GM12878 (cell line): ENCODE measurements at regions of chr11 and their contacts with region 1.

Region 1: DNA sequence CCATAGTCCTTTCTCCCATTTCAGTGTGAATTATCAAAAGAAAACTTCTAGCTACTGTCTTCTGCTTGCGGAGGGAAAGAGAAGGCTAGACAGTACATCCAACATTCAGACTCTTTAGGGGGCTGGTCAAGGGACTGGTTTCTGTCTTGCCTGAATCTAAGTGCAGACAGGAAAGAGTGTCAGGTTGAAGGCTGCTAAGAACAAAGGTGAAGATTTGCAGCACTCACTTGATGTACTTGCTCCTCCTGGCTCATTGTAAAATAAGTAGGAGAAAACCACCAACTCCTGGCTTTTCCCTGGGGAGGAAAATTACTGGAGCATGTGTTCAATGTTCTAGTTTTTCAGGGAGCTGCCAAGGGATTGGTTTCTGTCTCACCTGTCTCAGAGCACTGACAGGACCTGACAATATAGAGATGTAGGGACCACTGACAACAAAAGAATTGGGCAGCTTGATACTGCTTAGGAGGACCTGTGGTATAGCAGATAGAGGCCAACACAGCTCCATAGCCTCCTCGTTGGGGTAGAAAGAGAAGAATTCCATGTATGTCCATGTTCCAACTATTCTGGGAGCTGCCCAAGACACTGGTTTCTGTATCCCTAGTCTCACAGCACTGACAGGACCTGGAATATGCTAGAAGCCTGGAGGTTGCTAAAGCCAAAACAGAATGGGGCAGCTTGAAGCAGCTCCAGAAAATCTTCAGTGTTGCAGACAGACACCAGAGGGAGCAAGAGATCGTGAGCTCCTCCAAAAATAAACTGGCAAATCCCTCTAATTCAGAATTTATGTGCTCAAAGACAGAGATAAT is 39.7 kb upstream of the MMP12 start:
- DNase-seq: no peak
- ATAC-seq: peak; percentile 85
- H3K4me3 ChIP-seq: no peak overlapping the region
- H3K27ac ChIP-seq: no peak overlapping the region
- H3K4me1 ChIP-seq: no peaks in the 10 kb centered on the region
- H3K27me3 ChIP-seq: peaks cover 0 to 2% of the 10 kb centered on the region in 2 experiments; a peak in 1 of 4 replicates
- CTCF ChIP-seq: peak; percentile 50 to 74 (median 64); a peak in 5 of 6 replicates
- EP300 ChIP-seq: no peak
- POLR2A ChIP-seq: no peak
- RAD21 ChIP-seq: peak; percentile 51

Region 2: DNA sequence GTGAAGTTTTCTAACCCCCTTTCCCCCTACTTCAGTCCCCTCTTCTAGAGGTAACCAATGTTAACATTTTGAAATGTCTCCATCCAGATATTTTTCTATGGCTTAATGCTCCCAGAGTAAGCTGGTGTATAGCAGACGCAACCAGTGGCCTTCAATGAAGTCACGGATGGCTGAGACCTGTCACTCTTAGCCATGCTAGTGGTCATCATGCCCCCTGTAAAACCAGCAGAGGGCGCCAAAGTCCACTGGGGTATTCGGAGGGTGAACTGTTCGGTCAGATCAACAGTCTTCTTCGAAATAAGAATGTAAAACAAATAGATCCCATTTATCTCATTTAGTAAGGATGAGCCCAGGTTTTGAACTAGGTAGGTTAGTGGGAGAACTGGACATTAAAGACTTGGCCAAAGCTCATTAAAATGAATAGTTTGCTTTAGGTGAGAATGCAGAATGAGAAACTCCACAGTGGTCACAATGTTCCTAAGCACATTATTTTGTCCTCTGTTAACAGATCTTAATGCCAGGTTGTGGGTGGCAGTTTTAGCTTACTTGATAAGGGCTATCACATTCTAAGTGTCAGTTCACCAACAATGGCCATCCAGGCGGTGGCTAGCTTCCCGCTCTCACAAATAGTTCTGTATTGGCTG is 181.1 kb before region 1 on chr11:
- CTCF ChIA-PET with region 1: interaction called, 11 read pairs
- POLR2A ChIA-PET with region 1: no interaction called
- RAD21 ChIA-PET with region 1: interaction called, 3 read pairs
- SMC1A ChIA-PET with region 1: interaction called, 6 read pairs
- in situ Hi-C with region 1: no loop called
- intact Hi-C with region 1: no loop called
- DNase-seq: no peak
- ATAC-seq: peak; percentile 100
- H3K4me3 ChIP-seq: no peak overlapping the region
- H3K27ac ChIP-seq: no peak overlapping the region
- H3K4me1 ChIP-seq: no peaks in the 10 kb centered on the region
- H3K27me3 ChIP-seq: no peaks in the 10 kb centered on the region
- CTCF ChIP-seq: peak; percentile 77 to 88 (median 83)
- EP300 ChIP-seq: no peak
- POLR2A ChIP-seq: no peak
- RAD21 ChIP-seq: peak; percentile 68

Region 3: GRCh38 chr11:102831489-102832440 is 82.7 kb before region 1 on chr11:
- CTCF ChIA-PET with region 1: interaction called, 23 read pairs
- POLR2A ChIA-PET with region 1: no interaction called
- RAD21 ChIA-PET with region 1: interaction called, 18 read pairs
- SMC1A ChIA-PET with region 1: interaction called, 19 read pairs
- in situ Hi-C with region 1: no loop called
- intact Hi-C with region 1: no loop called
- DNase-seq: no peak
- ATAC-seq: peak; percentile 80
- H3K4me3 ChIP-seq: no peak overlapping the region
- H3K27ac ChIP-seq: no peak overlapping the region
- H3K4me1 ChIP-seq: no peaks in the 10 kb centered on the region
- H3K27me3 ChIP-seq: peaks cover 0 to 9% of the 10 kb centered on the region in 2 experiments; a peak in 2 of 4 replicates
- CTCF ChIP-seq: peak; percentile 31 to 60 (median 53); a peak in 5 of 6 replicates
- EP300 ChIP-seq: no peak
- POLR2A ChIP-seq: no peak
- RAD21 ChIP-seq: peak; percentile 41; the same call in 1 of the 2 replicates

Region 4: GRCh38 chr11:102940714-102941588 is 26.5 kb after region 1 on chr11:
- CTCF ChIA-PET with region 1: interaction called, 334 read pairs
- POLR2A ChIA-PET with region 1: interaction called, 30 read pairs
- RAD21 ChIA-PET with region 1: interaction called, 140 read pairs
- SMC1A ChIA-PET with region 1: interaction called, 216 read pairs
- in situ Hi-C with region 1: no loop called
- intact Hi-C with region 1: loop called (anchors 1 kb)
- DNase-seq: peak; percentile 37
- ATAC-seq: peak; percentile 92
- H3K4me3 ChIP-seq: no peak overlapping the region
- H3K27ac ChIP-seq: no peak overlapping the region
- H3K4me1 ChIP-seq: no peaks in the 10 kb centered on the region
- H3K27me3 ChIP-seq: no peaks in the 10 kb centered on the region
- CTCF ChIP-seq: peak; percentile 63 to 83 (median 79)
- EP300 ChIP-seq: no peak
- POLR2A ChIP-seq: no peak
- RAD21 ChIP-seq: peak; percentile 81

Region 5: DNA sequence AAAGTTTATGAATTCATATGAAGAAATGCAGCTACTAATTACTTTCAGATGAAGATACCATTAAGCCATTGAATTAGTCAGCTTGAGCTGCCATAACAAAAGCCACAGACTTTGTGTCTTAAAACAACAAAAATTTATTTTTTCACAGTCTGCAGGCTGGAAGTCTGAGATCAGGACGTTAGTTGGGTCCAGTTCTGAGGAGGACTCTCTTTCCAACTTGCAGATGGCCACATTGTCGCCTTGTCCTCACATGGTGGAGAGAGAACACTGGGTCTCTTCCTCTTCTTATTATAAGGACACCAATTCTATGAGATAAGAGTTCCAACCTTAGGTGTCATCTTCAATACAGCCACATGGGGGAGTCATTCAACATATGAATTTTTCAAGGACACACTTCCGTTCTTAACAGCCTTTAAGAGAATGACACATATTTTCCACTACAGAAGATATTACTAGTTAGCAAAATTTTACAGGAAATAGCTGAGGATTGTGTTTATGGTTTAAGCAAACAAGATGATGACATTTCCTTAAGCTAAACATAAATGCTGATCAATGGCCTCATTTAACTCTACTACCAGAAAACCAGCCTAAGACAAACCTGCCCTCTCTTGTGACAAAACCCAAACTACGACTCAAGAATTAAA is 121.5 kb after region 1 on chr11:
- CTCF ChIA-PET with region 1: interaction called, 17 read pairs
- POLR2A ChIA-PET with region 1: no interaction called
- RAD21 ChIA-PET with region 1: interaction called, 21 read pairs
- SMC1A ChIA-PET with region 1: interaction called, 18 read pairs
- in situ Hi-C with region 1: no loop called
- intact Hi-C with region 1: no loop called
- DNase-seq: peak; percentile 55
- ATAC-seq: peak; percentile 95
- H3K4me3 ChIP-seq: no peak overlapping the region
- H3K27ac ChIP-seq: no peak overlapping the region
- H3K4me1 ChIP-seq: no peaks in the 10 kb centered on the region
- H3K27me3 ChIP-seq: no peaks in the 10 kb centered on the region
- CTCF ChIP-seq: peak; percentile 61 to 67 (median 62)
- EP300 ChIP-seq: no peak
- POLR2A ChIP-seq: no peak
- RAD21 ChIP-seq: peak; percentile 64

Region 6: GRCh38 chr11:103108933-103109817 is 194.7 kb after region 1 on chr11 and contains the start of gene DYNC2H1:
- CTCF ChIA-PET with region 1: interaction called, 10 read pairs
- POLR2A ChIA-PET with region 1: no interaction called
- RAD21 ChIA-PET with region 1: no interaction called
- SMC1A ChIA-PET with region 1: interaction called, 5 read pairs
- in situ Hi-C with region 1: no loop called
- intact Hi-C with region 1: no loop called
- DNase-seq: peak; percentile 58
- ATAC-seq: peak; percentile 99
- H3K4me3 ChIP-seq: peak within 1 kb of the TSS; percentile 78
- H3K27ac ChIP-seq: no peak within 1 kb of the TSS
- H3K4me1 ChIP-seq: peaks cover 3% of the 10 kb centered on the region; the same call in 1 of the 2 replicates
- H3K27me3 ChIP-seq: no peaks in the 10 kb centered on the region; a peak in 2 of 4 replicates
- CTCF ChIP-seq: peak; percentile 44 to 58 (median 54)
- EP300 ChIP-seq: no peak
- POLR2A ChIP-seq: no peak
- RAD21 ChIP-seq: peak; percentile 27; the same call in 1 of the 2 replicates
- polyA plus RNA-seq, gene DYNC2H1: not detected